HCT116 (cell line): ENCODE measurements at regions of chr4 and their contacts with region 1.

Region 1: GRCh38 chr4:110193822-110194761 is 4.3 kb downstream of the ELOVL6 start:
- DNase-seq: peak; percentile 88
- ATAC-seq: peak; percentile 66
- H3K4me3 ChIP-seq: peak overlapping the region in 1 of 2 experiments; percentile 2; a peak in 1 of 4 replicates
- H3K27ac ChIP-seq: peak overlapping the region; percentile 42; the same call in 1 of the 2 replicates
- H3K4me1 ChIP-seq: peaks cover 22 to 29% of the 10 kb centered on the region in 2 experiments
- H3K27me3 ChIP-seq: no peaks in the 10 kb centered on the region
- CTCF ChIP-seq: no peak
- POLR2A ChIP-seq: peak; percentile 90
- RAD21 ChIP-seq: no peak

Region 2: GRCh38 chr4:110049951-110050925 is 143.9 kb before region 1 on chr4:
- CTCF ChIA-PET with region 1: no interaction called
- POLR2A ChIA-PET with region 1: no interaction called
- RAD21 ChIA-PET with region 1: no interaction called
- intact Hi-C with region 1: loop called (anchors 5 kb)
- DNase-seq: peak; percentile 8
- ATAC-seq: peak; percentile 67; the same call in 1 of the 2 replicates
- H3K4me3 ChIP-seq: no peak overlapping the region
- H3K27ac ChIP-seq: no peak overlapping the region
- H3K4me1 ChIP-seq: no peaks in the 10 kb centered on the region
- H3K27me3 ChIP-seq: no peaks in the 10 kb centered on the region
- CTCF ChIP-seq: peak; percentile 52 to 83 (median 82); a peak in 5 of 6 replicates
- POLR2A ChIP-seq: no peak
- RAD21 ChIP-seq: peak; percentile 75

Region 3: GRCh38 chr4:110087070-110087708 is 106.9 kb before region 1 on chr4:
- CTCF ChIA-PET with region 1: no interaction called
- POLR2A ChIA-PET with region 1: no interaction called
- RAD21 ChIA-PET with region 1: interaction called in 1 of 2 experiments, 4 read pairs
- intact Hi-C with region 1: loop called (anchors 2 kb)
- DNase-seq: peak; percentile 51
- ATAC-seq: no peak
- H3K4me3 ChIP-seq: no peak overlapping the region
- H3K27ac ChIP-seq: peak overlapping the region; percentile 49; the same call in 1 of the 2 replicates
- H3K4me1 ChIP-seq: peaks cover 46 to 71% of the 10 kb centered on the region in 2 experiments
- H3K27me3 ChIP-seq: no peaks in the 10 kb centered on the region
- CTCF ChIP-seq: no peak
- POLR2A ChIP-seq: no peak
- RAD21 ChIP-seq: peak; percentile 14; the same call in 1 of the 2 replicates

Region 4: GRCh38 chr4:110165382-110166285 is 28.5 kb before region 1 on chr4:
- CTCF ChIA-PET with region 1: no interaction called
- POLR2A ChIA-PET with region 1: interaction called, 13 read pairs
- RAD21 ChIA-PET with region 1: no interaction called
- intact Hi-C with region 1: loop called (anchors 5 kb)
- DNase-seq: peak; percentile 31
- ATAC-seq: peak; percentile 48; the same call in 1 of the 2 replicates
- H3K4me3 ChIP-seq: no peak overlapping the region
- H3K27ac ChIP-seq: peak overlapping the region; percentile 79; the same call in 1 of the 2 replicates
- H3K4me1 ChIP-seq: peaks cover 35 to 44% of the 10 kb centered on the region in 2 experiments
- H3K27me3 ChIP-seq: no peaks in the 10 kb centered on the region
- CTCF ChIP-seq: no peak
- POLR2A ChIP-seq: no peak
- RAD21 ChIP-seq: no peak

Region 5: DNA sequence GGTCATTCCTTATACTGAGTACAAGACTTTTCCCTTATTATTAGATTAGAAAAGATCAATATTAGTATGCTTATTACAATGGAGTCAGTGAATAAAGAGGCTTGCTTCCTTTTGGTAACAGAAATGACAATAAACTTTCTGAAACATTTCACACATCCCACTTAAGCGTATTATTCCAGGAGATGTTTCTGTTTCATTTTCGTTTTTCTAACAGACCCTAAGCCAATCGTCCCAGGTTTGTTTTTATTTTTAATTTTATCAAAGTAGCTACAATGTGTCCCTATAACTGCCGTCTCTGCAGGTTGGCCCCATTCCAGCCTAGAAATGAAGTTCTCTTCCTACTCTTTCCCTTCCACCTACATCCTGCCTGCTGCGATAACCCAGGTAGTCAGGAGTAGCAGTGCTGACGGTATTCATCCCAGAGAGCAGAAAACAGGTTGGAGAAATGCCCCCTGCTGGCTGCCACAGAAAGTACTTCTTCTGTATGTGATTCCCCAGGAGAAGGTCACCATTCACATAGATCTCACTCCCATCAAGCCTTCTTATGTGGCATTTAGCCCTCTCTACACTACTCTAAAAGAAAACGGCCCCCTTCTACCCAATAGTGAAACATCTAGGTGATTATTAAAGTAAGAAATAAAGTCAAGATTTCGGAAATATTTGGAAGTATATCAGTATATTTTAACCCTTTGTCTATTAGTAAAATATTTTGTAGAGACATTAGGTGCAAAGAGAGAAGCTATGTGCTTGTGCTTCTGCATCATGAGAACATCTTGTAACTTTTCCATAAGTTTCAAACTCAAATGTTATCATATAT is 322.2 kb after region 1 on chr4:
- CTCF ChIA-PET with region 1: no interaction called
- POLR2A ChIA-PET with region 1: no interaction called
- RAD21 ChIA-PET with region 1: no interaction called
- intact Hi-C with region 1: loop called (anchors 5 kb)
- DNase-seq: peak; percentile 72
- ATAC-seq: peak; percentile 98
- H3K4me3 ChIP-seq: peak overlapping the region; percentile 33 to 53
- H3K27ac ChIP-seq: no peak overlapping the region
- H3K4me1 ChIP-seq: peaks cover 0 to 9% of the 10 kb centered on the region in 2 experiments; a peak in 1 of 4 replicates
- H3K27me3 ChIP-seq: no peaks in the 10 kb centered on the region
- CTCF ChIP-seq: peak; percentile 73 to 84 (median 79)
- POLR2A ChIP-seq: no peak
- RAD21 ChIP-seq: peak; percentile 61